Spleen (tissue), 13 donors: ENCODE measurements at regions of chr9 and their contacts with region 1.

Region 1: DNA sequence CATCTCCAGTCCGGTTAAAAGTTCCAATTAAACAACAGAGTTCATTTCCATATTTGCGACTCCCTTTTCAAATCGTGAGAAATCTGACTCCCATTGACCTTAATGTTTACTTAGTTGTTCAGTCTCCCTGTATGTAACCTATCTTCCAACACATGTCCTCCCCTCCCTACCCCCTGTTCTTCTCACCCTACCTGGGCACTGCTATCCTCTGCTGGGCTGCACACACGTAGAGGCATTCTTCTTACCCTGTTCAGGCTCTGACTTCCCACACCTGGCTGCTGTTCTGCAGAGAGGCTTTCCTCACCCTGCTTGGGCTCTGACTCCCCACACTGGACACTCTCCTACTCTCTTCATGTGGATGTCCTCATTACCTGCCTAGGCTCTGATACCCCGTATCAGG is 51.9 kb upstream of the TAL2 start:
- DNase-seq: no peak
- H3K4me3 ChIP-seq: no peak overlapping the region
- H3K27ac ChIP-seq: no peak overlapping the region
- H3K4me1 ChIP-seq: no peaks in the 10 kb centered on the region
- H3K27me3 ChIP-seq: no peaks in the 10 kb centered on the region
- CTCF ChIP-seq: no peak
- POLR2A ChIP-seq: no peak

Region 2: DNA sequence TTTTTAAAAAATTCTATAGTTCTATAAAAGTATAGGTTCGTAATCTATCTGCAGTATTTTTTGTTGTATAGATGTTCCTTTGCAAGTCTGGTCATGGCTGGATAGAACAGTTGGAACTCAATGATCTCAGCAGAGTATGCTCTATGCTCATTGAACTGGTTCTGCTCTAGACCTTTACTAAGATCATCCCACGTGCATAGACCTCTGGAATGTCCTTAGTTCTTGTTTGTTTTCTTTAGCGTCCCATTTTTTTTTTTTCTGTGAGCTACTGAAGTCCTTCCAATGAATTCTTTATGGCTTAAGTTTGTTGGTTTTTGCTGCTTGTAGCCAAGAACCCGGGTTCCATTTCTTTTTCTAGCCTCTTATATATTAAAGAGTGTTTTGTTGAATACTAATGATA is 87.5 kb after region 1 on chr9:
- intact Hi-C with region 1: no loop called
- DNase-seq: no peak
- H3K4me3 ChIP-seq: no peak overlapping the region
- H3K27ac ChIP-seq: no peak overlapping the region
- H3K4me1 ChIP-seq: peaks cover 0 to 26% (median 21%) of the 10 kb centered on the region in 6 donors
- H3K27me3 ChIP-seq: peaks cover 0 to 11% (median 9%) of the 10 kb centered on the region in 7 donors
- CTCF ChIP-seq: no peak
- POLR2A ChIP-seq: no peak

Region 3: DNA sequence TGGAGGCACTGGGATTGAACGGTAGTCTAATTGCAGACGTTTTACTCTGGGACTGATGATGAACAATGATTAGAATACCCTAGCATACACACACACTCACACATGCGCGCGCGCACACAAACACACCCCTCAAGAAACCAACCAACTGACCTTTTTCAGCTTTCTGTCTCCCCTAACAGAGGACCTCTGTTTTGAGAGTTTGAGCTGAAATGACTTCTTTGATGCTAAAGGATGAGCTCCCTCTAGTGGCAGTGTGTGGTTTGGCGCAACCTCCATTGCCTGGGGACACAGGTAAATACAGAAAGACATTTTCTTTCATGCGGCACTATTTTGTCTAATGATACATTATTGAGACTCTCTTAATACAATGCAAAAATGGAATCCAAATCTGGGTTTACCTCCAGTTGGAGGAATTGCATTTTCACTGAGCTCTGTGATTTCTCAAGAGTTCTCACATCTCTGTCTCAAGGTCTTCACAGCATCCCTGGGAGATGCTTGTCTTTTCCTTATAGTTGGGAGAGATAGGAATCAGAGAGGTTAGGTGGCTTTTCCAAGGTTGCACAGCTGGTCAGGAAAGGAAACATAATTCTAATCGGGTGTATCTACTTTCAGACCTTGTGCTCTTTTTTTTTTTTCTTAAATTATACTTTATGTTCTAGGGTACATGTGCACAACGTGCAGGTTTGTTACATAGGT is 271.4 kb after region 1 on chr9:
- intact Hi-C with region 1: loop called (anchors 10 kb)
- DNase-seq: peak; percentile 77
- H3K4me3 ChIP-seq: no peak overlapping the region
- H3K27ac ChIP-seq: no peak overlapping the region
- H3K4me1 ChIP-seq: no peaks in the 10 kb centered on the region
- H3K27me3 ChIP-seq: no peaks in the 10 kb centered on the region
- CTCF ChIP-seq: peak; percentile 36 to 88 (median 73)
- POLR2A ChIP-seq: no peak